ENCODE measurements at regions of chr3 and their contacts with region 1.

Region 1: GRCh38 chr3:61157414-61157813 is 93.8 kb downstream of the FHIT start:
- DNase-seq: no peak
- ATAC-seq: no peak

Region 2: DNA sequence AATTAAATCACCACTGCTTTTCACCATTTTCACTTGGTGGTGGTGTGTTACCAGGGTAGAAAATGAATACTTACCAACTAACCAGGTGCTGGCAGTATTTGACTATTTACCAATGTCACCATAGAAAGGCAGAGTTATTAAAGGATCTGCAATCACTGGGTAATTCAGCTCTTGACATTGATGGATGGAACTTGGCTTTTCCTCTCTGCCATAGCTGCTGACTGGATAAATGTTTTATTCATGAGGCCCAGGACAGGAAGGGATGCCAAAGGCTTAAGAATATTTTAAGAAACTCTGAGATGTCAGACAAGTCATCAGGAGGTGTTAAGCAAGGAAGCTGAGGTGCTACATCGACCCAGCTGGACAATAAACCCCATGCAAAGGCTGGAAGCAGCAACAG is 1612.0 kb before region 1 on chr3:
- intact Hi-C with region 1: loop called (anchors 5 kb)
- DNase-seq: no peak
- ATAC-seq: peak; percentile 56

Region 3: DNA sequence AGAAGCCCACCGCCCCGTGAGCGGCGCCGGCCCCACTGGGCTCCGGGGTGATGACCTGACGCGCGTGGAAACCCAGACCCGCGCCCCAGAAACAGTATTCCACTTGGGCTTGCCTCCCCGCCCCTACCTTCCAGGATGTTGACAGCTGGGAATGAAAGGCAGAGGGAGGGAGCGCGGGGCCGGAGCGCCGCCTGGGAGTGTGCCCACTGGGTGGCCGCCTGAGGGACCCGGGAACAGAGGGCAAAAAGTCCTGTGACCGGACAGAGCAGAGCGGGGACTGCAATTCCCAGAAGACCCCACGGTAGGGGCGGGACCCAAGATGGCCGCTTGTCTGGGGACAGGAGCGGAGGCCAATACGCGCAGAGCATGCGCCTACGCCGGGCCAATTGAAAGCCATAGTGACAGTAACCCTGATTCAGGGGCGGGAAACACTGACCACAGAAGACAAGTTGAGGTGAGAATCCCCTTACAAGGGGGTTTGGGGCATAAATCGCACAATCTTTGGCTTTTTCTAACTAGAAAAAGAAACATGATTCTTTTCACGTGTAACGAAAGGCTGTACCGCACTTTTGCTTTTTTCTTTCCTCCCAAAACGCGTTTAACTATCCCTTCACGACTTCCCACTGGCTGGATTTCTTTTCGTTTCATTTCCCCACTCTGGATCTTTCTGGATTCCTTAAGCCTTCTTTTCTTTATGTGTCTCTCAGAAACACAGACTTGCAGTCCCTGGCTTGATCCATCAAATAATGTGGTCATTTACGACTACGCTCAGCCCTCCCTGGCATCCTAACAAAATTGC is 94.0 kb after region 1 on chr3 and contains the start of gene FHIT:
- intact Hi-C with region 1: loop called (anchors 5 kb)
- DNase-seq: peak; percentile 97
- ATAC-seq: peak; percentile 99
- total RNA-seq, gene FHIT: 24.5 TPM

Measured in Right ventricle myocardium inferior (tissue), 1 donor.